ENCODE measurements at regions of chr7 and their contacts with region 1.

Region 1: DNA sequence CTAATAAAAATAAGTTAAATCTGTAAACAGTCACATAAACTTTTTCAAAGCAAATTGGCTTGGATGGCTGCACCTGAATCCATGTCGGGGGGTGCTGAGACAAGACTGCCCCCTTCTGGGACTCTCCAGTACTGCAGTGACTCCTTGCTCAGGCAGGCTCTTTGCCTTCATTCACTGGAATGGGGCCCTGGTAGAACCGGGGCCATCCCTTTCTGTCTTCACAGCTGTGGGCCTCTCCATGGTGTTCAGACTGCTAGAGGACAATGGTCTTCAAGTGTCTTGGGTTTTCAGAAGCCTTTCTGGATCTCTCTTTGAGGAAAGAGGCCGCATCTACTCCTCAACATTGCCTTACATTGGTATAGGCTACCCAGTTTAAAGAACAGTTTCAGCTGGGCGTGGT is 16.1 kb upstream of the IMPDH1 start:
- DNase-seq: peak; percentile 80

Region 2: DNA sequence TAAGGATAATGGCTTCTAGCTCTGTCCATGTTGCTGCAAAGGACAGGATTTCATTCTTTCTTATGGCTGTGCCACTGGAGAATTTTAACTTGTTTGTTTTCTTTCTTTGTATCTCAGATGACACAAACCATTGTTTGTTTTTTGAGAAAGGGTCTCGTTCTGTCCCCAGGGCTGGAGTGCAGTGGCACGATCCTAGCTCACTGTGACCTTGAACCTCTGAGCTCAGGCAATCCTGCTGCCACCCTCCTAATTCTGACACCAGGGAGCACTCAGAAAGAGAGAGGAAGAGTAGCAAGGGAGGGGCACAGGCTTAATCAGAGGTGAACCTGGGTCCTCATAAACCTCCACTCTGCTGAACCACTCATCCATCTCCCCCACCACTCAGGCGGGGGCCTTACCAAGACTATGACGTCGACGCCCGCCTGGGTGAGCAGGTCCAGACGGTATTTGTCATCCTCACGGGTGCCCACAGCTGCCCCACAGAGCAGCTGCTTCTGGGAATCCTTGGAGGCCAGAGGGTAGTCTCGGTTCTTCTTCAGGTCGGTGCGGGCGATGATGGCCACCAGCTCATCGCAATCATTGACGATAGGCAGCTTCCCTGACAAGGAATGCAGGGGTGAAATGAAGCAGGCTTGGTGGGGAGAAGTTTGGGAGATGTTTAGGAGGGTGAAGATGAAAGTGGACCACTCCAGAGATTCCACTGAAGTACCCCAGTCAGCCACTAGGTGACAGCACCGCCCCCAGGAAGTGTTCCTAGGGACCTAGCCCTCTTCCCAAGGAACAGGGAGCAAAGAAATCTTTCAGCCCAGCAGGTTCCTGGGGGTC is 27.6 kb before region 1 on chr7:
- CTCF ChIA-PET with region 1: interaction called, 20 read pairs
- POLR2A ChIA-PET with region 1: no interaction called
- DNase-seq: peak; percentile 70

Region 3: GRCh38 chr7:128409596-128410160 is 16.2 kb before region 1 on chr7 and contains the start of gene IMPDH1:
- CTCF ChIA-PET with region 1: interaction called, 23 read pairs
- POLR2A ChIA-PET with region 1: interaction called, 3 read pairs
- DNase-seq: peak; percentile 91

Region 4: DNA sequence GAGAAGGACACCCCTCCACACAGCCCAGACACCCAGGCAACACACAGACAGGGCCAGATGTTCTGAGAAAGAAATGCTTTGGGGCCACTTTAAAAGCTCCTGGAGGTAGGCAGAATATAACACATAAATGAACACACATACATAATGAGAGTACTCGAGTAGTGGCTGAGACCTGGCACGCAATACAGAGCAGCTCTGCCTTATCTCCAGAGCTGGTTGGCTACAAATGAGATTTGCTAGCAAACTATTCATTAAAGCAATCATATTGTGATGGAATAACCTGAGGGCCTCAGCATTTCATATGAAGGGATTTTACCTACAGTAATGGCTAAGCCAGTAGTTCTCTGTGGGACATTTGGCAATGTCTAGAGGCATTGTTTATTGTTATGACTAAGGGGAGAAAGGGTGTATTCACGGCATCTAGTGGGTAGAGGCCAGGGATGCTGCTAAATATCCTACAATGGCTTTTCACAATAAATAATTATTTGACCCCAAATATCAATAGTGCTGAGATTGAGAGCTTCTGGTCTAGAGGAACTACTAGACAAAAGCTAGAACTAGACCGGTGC is 10.5 kb before region 1 on chr7:
- CTCF ChIA-PET with region 1: interaction called, 23 read pairs
- POLR2A ChIA-PET with region 1: no interaction called
- DNase-seq: no peak

Region 5: GRCh38 chr7:128437426-128438332 is 11.8 kb after region 1 on chr7:
- CTCF ChIA-PET with region 1: interaction called, 10 read pairs
- POLR2A ChIA-PET with region 1: no interaction called
- DNase-seq: no peak

Region 6: DNA sequence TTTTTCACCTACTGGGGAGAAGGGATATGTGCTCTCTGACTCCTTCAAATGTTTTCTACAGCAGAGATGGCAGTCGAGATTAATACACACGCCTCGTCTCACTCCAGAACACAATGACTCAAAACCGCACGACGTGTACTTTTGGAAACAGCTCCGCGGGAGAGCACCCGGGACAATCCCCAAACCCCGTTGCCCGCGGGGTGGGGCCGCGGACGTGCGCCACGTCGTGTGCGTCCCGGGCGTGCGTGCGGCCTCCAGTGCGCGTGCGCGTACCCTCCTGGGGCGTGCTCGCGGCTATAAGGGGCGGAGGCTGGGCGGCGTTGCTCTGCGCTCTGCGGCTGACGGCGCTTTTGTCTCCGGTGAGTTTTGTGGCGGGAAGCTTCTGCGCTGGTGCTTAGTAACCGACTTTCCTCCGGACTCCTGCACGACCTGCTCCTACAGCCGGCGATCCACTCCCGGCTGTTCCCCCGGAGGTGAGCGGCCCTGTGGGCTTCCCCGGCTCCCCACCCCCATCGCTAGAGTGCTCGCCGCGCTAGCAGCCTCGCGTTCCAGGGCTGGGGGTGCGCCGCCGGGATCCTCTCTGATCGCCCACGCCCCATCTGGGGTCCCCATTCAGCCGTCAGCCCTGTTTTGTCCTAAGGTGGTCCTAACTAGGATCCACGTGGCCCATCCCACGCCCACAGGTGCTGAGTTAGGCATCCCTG is 29.9 kb after region 1 on chr7 and contains the start of gene HILPDA:
- CTCF ChIA-PET with region 1: interaction called, 117 read pairs
- POLR2A ChIA-PET with region 1: interaction called, 21 read pairs
- DNase-seq: peak; percentile 93